Ascending aorta (tissue), 2 donors: ENCODE measurements at regions of chr7 and their contacts with region 1.

Region 1: DNA sequence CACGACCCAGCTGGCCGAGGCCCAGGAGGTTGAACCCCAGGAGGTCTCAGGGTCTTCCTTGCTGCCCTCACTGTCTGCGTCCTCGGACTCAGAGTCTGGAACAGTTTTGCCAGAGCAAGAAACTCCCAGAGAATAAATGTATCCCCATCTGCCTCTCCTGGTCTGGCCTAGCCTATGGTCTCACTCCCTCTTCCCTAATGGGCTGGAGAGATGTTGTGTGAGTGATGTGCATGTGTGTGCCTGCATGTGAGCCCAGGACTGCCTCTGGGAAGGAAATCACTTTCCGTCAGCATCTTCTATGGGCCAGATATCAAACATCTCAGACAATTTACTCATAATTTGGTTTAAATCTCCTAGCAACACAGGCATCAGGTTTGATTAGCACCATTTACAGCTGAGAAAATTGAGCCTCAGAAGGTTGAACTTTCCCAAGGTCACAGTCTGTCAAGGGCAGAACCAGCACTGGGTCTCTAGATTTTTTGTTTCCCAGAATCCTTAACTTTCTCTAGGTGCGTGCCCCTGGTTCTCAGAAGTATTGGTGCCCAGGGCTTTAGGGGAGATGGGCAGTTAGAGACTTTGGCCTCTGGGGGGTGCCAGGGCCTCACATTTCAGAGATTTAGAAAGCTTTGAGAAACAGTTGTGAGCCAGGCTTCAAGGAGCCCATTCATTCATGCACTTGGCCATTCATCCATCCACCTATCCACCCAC is 4.9 kb downstream of the TMEM270 start:
- DNase-seq: no peak
- H3K4me3 ChIP-seq: no peak overlapping the region
- H3K27ac ChIP-seq: no peak overlapping the region
- H3K4me1 ChIP-seq: peaks cover 21 to 28% of the 10 kb centered on the region in 2 donors
- H3K27me3 ChIP-seq: no peaks in the 10 kb centered on the region
- CTCF ChIP-seq: peak; percentile 68 to 83 (median 81)

Region 2: GRCh38 chr7:73894733-73895551 is 29.1 kb after region 1 on chr7:
- intact Hi-C with region 1: loop called (anchors 1 kb)
- DNase-seq: peak; percentile 92 to 99
- H3K4me3 ChIP-seq: no peak overlapping the region
- H3K27ac ChIP-seq: peak overlapping the region; percentile 97
- H3K4me1 ChIP-seq: peaks cover 21 to 51% of the 10 kb centered on the region in 2 donors
- H3K27me3 ChIP-seq: no peaks in the 10 kb centered on the region
- CTCF ChIP-seq: peak in 2 of 3 experiments; percentile 25 to 42

Region 3: DNA sequence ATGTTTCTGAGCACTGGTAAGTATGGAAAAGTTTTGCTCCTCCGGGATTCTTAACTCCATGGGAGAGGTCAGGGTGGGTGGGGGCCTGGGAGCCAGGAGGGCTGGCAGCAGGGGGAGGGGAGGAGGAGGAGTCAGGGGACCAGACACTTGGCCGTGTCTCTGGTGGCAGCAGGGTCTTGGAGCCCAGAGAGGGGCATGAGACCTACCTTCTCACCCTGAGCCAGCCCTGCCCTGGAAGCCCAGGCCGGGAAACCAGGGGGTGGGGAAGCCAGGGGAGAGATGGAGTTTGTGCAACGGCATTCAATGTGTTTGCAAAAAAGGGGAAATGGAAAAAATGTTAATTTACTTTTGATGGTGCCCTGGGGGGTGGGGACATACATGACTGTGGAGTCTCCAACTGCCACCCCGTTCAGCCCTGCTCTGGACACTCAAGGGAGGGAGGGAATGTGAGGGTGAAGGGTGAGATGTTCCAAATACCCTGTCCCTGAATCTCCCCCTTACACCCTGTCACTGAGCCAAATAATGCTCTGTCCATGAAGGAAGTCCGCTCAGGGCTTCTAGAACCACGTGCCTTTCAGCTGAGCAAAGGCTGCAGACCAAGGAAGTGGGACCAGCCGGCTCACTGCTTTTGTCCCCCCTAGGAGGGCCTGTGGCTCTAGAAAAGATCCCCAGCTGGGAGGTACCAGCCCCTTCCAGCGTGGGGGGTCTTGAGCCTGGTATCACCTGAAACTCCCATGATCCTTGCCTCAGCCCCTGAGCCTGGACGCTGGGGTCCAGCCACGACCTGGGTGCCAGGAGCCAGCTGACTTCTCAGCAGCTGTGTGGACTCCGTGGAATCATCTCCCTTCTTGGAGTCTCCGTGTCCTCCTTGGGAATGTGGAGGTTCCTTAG is 43.4 kb after region 1 on chr7:
- intact Hi-C with region 1: no loop called
- DNase-seq: no peak
- H3K4me3 ChIP-seq: no peak overlapping the region
- H3K27ac ChIP-seq: no peak overlapping the region
- H3K4me1 ChIP-seq: peaks cover 7 to 12% of the 10 kb centered on the region in 2 donors
- H3K27me3 ChIP-seq: no peaks in the 10 kb centered on the region
- CTCF ChIP-seq: no peak

Region 4: GRCh38 chr7:74033372-74034311 is 167.8 kb after region 1 on chr7:
- intact Hi-C with region 1: loop called (anchors 1 kb)
- DNase-seq: peak; percentile 64 to 95
- H3K4me3 ChIP-seq: peak overlapping the region; percentile 75 to 83
- H3K27ac ChIP-seq: peak overlapping the region; percentile 93 to 98
- H3K4me1 ChIP-seq: peaks cover 30 to 62% of the 10 kb centered on the region in 2 donors
- H3K27me3 ChIP-seq: no peaks in the 10 kb centered on the region
- CTCF ChIP-seq: no peak

Region 5: GRCh38 chr7:74173866-74174605 is 308.1 kb after region 1 on chr7 and contains the start of gene EIF4H:
- intact Hi-C with region 1: loop called (anchors 1 kb)
- DNase-seq: peak; percentile 77 to 97
- H3K4me3 ChIP-seq: peak within 1 kb of the TSS; percentile 70 to 99
- H3K27ac ChIP-seq: peak within 1 kb of the TSS; percentile 87 to 90
- H3K4me1 ChIP-seq: peaks cover 17 to 46% of the 10 kb centered on the region in 2 donors
- H3K27me3 ChIP-seq: no peaks in the 10 kb centered on the region
- CTCF ChIP-seq: no peak
- total RNA-seq, gene EIF4H: 150 TPM

Region 6: DNA sequence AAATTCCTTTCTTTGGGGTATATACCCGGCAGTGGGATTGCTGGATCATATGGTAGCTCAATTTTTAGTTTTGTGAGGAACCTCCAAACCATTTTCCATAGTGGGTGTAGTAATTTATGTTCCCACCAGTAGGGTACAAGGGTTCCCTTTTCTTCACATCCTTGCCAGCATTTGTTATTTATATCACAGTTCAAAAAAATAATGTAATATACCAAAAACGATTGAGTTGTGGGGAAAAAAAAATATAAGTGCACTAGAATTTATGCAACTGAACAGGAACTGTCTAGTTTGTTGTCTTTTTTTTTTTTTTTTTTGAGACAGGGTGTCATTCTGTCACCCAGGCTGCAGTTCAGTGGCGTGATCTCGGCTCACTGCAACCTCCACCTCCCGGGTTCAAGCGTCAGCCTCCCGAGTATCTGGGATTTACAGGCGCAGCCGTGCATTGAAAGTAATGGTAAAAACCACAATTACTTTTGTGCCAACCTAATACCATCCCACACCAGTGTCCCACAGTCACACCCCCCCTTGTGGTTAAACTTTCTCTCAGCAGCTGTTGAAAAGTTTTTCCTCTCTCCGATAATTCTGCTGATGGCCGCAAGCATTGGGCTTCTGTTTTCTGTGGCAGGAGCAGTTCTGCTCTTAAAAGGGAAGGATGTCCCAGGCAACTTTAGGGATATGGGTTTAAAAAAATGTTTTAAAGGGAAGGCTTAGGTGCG is 337.1 kb after region 1 on chr7:
- intact Hi-C with region 1: loop called (anchors 1 kb)
- DNase-seq: no peak
- H3K4me3 ChIP-seq: no peak overlapping the region
- H3K27ac ChIP-seq: no peak overlapping the region
- H3K4me1 ChIP-seq: peaks cover 0 to 5% of the 10 kb centered on the region in 2 donors
- H3K27me3 ChIP-seq: no peaks in the 10 kb centered on the region
- CTCF ChIP-seq: peak; percentile 45 to 60 (median 54)

Region 7: GRCh38 chr7:74401137-74401859 is 535.4 kb after region 1 on chr7:
- intact Hi-C with region 1: loop called (anchors 5 kb)
- DNase-seq: peak in 1 of 2 donors; percentile 82
- H3K4me3 ChIP-seq: no peak overlapping the region
- H3K27ac ChIP-seq: no peak overlapping the region
- H3K4me1 ChIP-seq: no peaks in the 10 kb centered on the region
- H3K27me3 ChIP-seq: no peaks in the 10 kb centered on the region
- CTCF ChIP-seq: peak; percentile 91 to 98 (median 97)